ENCODE measurements at regions of chr6 and their contacts with region 1.

Region 1: GRCh38 chr6:170044836-170045562 is 245.9 kb downstream of the DLL1 start:
- DNase-seq: no peak
- ATAC-seq: no peak
- H3K4me3 ChIP-seq: no peak overlapping the region
- H3K4me3 Mint-ChIP-seq: no peak overlapping the region
- H3K27ac ChIP-seq: no peak overlapping the region
- H3K27ac Mint-ChIP-seq: no peak overlapping the region
- H3K4me1 ChIP-seq: no peaks in the 10 kb centered on the region
- H3K4me1 Mint-ChIP-seq: peaks cover 0 to 3% (median 0%) of the 10 kb centered on the region in 3 donors
- H3K27me3 ChIP-seq: peaks cover 0 to 32% of the 10 kb centered on the region in 2 experiments
- H3K27me3 Mint-ChIP-seq: peaks cover 2 to 4% of the 10 kb centered on the region in 2 donors

Region 2: GRCh38 chr6:169994739-169995138 is 50.3 kb before region 1 on chr6:
- CTCF ChIA-PET with region 1: no interaction called
- POLR2A ChIA-PET with region 1: interaction called in 1 of 2 experiments, 10 read pairs
- DNase-seq: no peak
- ATAC-seq: no peak
- H3K4me3 ChIP-seq: no peak overlapping the region
- H3K4me3 Mint-ChIP-seq: no peak overlapping the region
- H3K27ac ChIP-seq: no peak overlapping the region
- H3K27ac Mint-ChIP-seq: no peak overlapping the region
- H3K4me1 ChIP-seq: peaks cover 6 to 22% of the 10 kb centered on the region in 2 experiments
- H3K4me1 Mint-ChIP-seq: peaks cover 9 to 23% (median 23%) of the 10 kb centered on the region in 3 donors
- H3K27me3 ChIP-seq: peaks cover 0 to 22% of the 10 kb centered on the region in 2 experiments
- H3K27me3 Mint-ChIP-seq: no peaks in the 10 kb centered on the region

Region 3: GRCh38 chr6:170029416-170030283 is 15.3 kb before region 1 on chr6:
- CTCF ChIA-PET with region 1: no interaction called
- POLR2A ChIA-PET with region 1: no interaction called
- DNase-seq: peak in 1 of 35 experiments; percentile 10
- ATAC-seq: no peak
- H3K4me3 ChIP-seq: no peak overlapping the region
- H3K4me3 Mint-ChIP-seq: no peak overlapping the region
- H3K27ac ChIP-seq: no peak overlapping the region
- H3K27ac Mint-ChIP-seq: no peak overlapping the region
- H3K4me1 ChIP-seq: no peaks in the 10 kb centered on the region
- H3K4me1 Mint-ChIP-seq: no peaks in the 10 kb centered on the region
- H3K27me3 ChIP-seq: peaks cover 0 to 10% of the 10 kb centered on the region in 2 experiments
- H3K27me3 Mint-ChIP-seq: peaks cover 0 to under 1% of the 10 kb centered on the region in 2 donors

Measured in T-cell (primary cell).